ENCODE measurements at regions of chr14 and their contacts with region 1.

Region 1: DNA sequence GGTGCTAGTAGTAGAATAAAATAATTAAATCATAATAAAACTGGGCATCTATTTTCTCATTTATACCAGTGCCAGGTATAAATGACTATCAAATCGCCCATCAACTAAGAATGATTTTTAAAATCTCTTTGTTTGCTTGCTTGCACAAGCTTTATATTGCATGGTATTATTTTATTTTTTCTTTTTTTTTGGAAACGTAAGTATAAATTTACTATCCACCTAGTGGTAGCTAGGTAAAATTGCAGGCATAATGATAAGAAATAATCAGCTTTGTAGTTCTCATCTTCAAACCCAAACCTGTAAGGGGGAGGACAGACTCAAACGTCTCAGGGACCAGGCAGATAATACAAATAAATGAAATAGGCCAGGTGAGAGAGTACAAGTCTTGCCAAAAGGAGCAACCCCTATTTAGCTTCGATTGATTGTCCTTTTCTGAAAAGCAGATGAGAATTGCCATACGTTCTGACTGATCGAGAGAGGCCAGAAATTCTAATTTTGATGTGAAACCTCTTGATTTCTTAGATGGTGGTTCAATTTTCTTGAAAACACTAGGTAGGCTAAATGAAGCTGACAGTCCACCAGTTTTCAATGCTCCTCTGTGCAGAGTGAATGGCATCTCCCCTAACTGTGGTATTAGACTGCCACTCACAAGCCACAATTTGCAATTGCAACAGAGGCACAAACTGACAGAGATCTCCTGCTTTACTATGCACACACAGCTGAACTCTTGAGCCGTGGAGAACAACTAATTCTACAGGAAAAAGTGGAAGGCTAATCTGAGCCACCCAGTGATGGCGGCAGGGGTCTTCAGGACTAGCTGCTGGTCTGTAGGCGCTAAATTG is 189.3 kb downstream of the DACT1 start:
- DNase-seq: no peak
- H3K4me3 ChIP-seq: no peak overlapping the region
- H3K27ac ChIP-seq: no peak overlapping the region
- H3K4me1 ChIP-seq: no peaks in the 10 kb centered on the region
- H3K27me3 ChIP-seq: no peaks in the 10 kb centered on the region
- CTCF ChIP-seq: peak in 1 of 3 experiments; percentile 15; a peak in 1 of 4 replicates
- EP300 ChIP-seq: no peak
- POLR2A ChIP-seq: no peak
- RAD21 ChIP-seq: peak; percentile 6 to 36; a peak in 2 of 4 replicates

Region 2: GRCh38 chr14:58805605-58806409 is 21.3 kb before region 1 on chr14:
- CTCF ChIA-PET with region 1: interaction called, 18 read pairs
- POLR2A ChIA-PET with region 1: no interaction called
- DNase-seq: no peak
- H3K4me3 ChIP-seq: no peak overlapping the region
- H3K27ac ChIP-seq: no peak overlapping the region
- H3K4me1 ChIP-seq: no peaks in the 10 kb centered on the region
- H3K27me3 ChIP-seq: no peaks in the 10 kb centered on the region
- CTCF ChIP-seq: no peak
- EP300 ChIP-seq: no peak
- POLR2A ChIP-seq: no peak
- RAD21 ChIP-seq: no peak

Region 3: GRCh38 chr14:58815161-58815701 is 11.8 kb before region 1 on chr14:
- CTCF ChIA-PET with region 1: interaction called, 30 read pairs
- POLR2A ChIA-PET with region 1: no interaction called
- DNase-seq: no peak
- H3K4me3 ChIP-seq: no peak overlapping the region
- H3K27ac ChIP-seq: no peak overlapping the region
- H3K4me1 ChIP-seq: no peaks in the 10 kb centered on the region
- H3K27me3 ChIP-seq: no peaks in the 10 kb centered on the region
- CTCF ChIP-seq: no peak
- EP300 ChIP-seq: no peak
- POLR2A ChIP-seq: no peak
- RAD21 ChIP-seq: no peak

Region 4: GRCh38 chr14:59199205-59199604 is 372.1 kb after region 1 on chr14:
- CTCF ChIA-PET with region 1: no interaction called
- POLR2A ChIA-PET with region 1: no interaction called
- DNase-seq: no peak
- H3K4me3 ChIP-seq: no peak overlapping the region
- H3K27ac ChIP-seq: no peak overlapping the region
- H3K4me1 ChIP-seq: no peaks in the 10 kb centered on the region
- H3K27me3 ChIP-seq: no peaks in the 10 kb centered on the region
- CTCF ChIP-seq: no peak
- EP300 ChIP-seq: no peak
- POLR2A ChIP-seq: no peak
- RAD21 ChIP-seq: no peak

Measured in H1 (cell line).